AG04450 (cell line): ENCODE measurements at regions of chr9 and their contacts with region 1.

Region 1: DNA sequence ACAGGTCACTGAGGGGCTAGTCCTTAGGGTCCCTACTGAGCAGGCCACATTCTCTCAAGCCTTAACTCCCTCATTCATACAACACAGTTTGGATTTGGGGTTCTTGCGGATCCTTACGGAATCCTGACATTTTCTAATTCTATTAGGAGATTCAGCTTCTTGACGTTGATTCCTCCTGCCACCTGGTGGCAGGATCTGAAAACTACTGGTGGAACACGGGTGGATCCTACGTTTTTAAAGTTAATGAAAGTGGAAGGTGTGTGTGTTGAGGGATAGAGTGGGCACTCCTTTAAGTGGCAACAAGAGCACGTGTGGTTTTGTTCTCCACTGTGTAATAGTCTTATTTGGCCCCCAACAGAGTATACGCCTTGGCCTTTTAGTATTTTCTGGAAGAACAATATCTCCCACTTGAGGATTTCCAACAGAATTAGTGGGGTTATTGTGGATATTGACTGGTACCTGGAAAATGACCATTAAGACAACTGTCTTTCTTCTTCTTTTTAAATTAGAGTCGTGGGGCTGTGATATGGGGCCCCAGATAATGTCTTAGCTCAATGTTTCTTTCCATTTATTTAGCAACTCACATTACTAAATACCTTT is 25.2 kb downstream of the SLC28A3 start:
- DNase-seq: no peak
- H3K4me3 ChIP-seq: no peak overlapping the region
- H3K27ac ChIP-seq: no peak overlapping the region
- H3K27me3 ChIP-seq: no peaks in the 10 kb centered on the region
- CTCF ChIP-seq: peak; percentile 82

Region 2: GRCh38 chr9:83920927-83921707 is 394.3 kb before region 1 on chr9 and contains the start of gene KIF27:
- CTCF ChIA-PET with region 1: interaction called, 14 read pairs
- POLR2A ChIA-PET with region 1: no interaction called
- DNase-seq: peak; percentile 94
- H3K4me3 ChIP-seq: peak within 1 kb of the TSS; percentile 70
- H3K27ac ChIP-seq: peak within 1 kb of the TSS; percentile 61
- H3K27me3 ChIP-seq: no peaks in the 10 kb centered on the region
- CTCF ChIP-seq: peak; percentile 7; the same call in 1 of the 2 replicates
- polyA plus RNA-seq, gene KIF27: 1.1 and 2.1 TPM in 2 replicates

Region 3: DNA sequence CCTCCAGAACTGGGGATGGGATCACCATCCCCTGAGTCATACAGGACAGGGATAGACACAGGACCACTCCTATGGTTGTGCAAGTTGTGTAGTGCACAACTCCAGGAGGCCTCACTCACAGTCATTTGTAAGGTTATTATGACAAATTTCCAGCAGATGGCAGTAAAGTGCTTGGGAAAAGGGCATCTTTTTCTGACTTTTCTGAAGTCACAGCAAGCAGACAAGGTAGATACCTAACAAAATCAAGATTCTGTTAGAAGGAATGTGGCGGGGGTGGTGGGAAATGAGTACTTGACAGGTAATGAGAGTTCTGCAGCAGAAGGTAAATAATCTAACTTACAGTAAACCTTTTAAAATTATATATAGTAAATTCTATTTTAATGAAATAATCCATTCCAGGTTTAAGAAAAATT is 377.5 kb before region 1 on chr9:
- CTCF ChIA-PET with region 1: interaction called, 17 read pairs
- POLR2A ChIA-PET with region 1: no interaction called
- DNase-seq: no peak
- H3K4me3 ChIP-seq: no peak overlapping the region
- H3K27ac ChIP-seq: no peak overlapping the region
- H3K27me3 ChIP-seq: no peaks in the 10 kb centered on the region
- CTCF ChIP-seq: peak; percentile 69

Region 4: DNA sequence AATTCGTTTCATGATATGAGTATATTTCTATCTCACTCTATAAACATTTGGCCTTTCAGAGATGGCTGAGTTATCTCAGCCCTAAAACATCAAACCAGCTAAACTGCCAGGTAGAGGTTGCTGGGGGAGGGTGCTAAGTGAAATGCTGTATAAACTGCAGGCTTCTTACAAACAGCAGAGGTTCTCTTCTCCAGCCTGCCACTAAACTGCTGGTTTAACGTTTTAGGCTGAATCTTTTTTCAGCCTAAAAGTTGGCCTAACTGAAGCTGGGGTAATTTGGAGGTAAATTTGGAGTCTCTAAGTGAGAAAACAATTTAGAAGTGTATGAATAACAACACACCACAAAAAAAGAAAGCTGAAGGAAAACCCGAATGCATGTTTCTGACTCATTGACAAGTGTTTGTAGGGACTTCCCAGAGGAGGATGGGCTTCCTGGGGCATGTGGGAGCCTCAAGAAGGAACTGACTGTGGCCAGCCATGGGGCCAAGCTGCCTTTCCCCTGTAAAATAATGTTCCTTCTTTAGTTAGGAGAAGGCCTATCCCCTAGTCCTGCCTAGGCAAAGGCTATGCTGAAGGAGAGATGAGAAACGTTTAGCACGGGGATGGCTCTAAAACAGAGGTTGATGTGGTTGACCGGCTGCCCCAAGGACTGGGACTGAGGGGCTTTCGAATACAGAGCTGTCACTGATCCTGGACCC is 19.1 kb before region 1 on chr9:
- CTCF ChIA-PET with region 1: interaction called, 24 read pairs
- POLR2A ChIA-PET with region 1: no interaction called
- DNase-seq: peak; percentile 49
- H3K4me3 ChIP-seq: no peak overlapping the region
- H3K27ac ChIP-seq: peak overlapping the region; percentile 94
- H3K27me3 ChIP-seq: no peaks in the 10 kb centered on the region
- CTCF ChIP-seq: no peak

Region 5: DNA sequence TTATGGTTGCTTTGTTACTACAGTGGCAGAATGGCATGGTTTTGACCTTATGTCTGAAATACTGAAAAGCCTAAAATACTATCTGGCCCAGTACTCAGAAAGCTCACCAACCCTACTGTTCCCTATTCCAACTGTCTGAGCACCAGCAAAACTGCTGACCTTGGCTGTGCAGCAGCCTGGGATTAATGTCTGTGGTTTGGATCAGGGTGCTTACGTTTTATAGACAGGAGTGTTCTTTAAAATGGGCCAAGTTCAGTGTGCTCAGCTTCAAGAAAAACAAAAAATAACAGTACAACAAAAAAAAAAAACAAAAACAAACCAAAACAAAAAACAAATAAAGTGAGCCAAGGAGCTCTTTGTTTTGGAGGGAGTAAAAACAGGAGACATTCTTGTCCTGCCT is 11.2 kb before region 1 on chr9:
- CTCF ChIA-PET with region 1: interaction called, 17 read pairs
- POLR2A ChIA-PET with region 1: no interaction called
- DNase-seq: no peak
- H3K4me3 ChIP-seq: no peak overlapping the region
- H3K27ac ChIP-seq: no peak overlapping the region
- H3K27me3 ChIP-seq: no peaks in the 10 kb centered on the region
- CTCF ChIP-seq: no peak

Region 6: DNA sequence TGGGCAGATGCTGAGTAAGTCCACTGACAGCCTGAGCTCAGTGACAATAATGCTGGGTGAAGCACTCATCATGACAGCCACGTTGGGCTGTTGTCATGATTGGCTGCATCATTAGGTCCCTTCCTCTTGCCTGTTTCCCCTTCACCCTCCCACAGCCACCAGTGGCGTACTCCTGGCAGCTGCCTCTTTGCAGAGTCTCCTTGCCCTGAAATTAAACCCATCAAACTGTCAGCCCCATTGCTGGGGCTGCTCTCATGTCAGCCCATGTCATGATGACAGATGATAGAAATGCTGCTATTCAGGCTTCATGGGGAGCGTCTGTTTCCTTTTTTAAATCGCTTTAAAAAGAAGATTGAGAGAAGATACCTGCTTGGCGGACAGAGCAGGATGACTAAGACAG is 1099.0 kb after region 1 on chr9:
- CTCF ChIA-PET with region 1: no interaction called
- POLR2A ChIA-PET with region 1: no interaction called
- DNase-seq: no peak
- H3K4me3 ChIP-seq: no peak overlapping the region
- H3K27ac ChIP-seq: no peak overlapping the region
- H3K27me3 ChIP-seq: no peaks in the 10 kb centered on the region
- CTCF ChIP-seq: no peak